Natural killer cell (primary cell): ENCODE measurements at regions of chr21 and their contacts with region 1.

Region 1: GRCh38 chr21:34630536-34631143 is 15.7 kb upstream of the RCAN1 start:
- DNase-seq: peak in 1 of 2 donors; percentile 80
- ATAC-seq: peak; percentile 75 to 78 (median 76)
- H3K4me3 ChIP-seq: no peak overlapping the region
- H3K4me3 Mint-ChIP-seq: no peak overlapping the region
- H3K27ac ChIP-seq: no peak overlapping the region
- H3K27ac Mint-ChIP-seq: no peak overlapping the region
- H3K4me1 ChIP-seq: no peaks in the 10 kb centered on the region
- H3K4me1 Mint-ChIP-seq: no peaks in the 10 kb centered on the region
- H3K27me3 ChIP-seq: no peaks in the 10 kb centered on the region
- H3K27me3 Mint-ChIP-seq: peaks cover 9 to 11% of the 10 kb centered on the region in 2 donors
- CTCF ChIP-seq: peak; percentile 87

Region 2: GRCh38 chr21:34362136-34362444 is 268.6 kb before region 1 on chr21:
- intact Hi-C with region 1: loop called (anchors 1 kb)
- DNase-seq: no peak
- ATAC-seq: peak in 1 of 3 donors; percentile 7
- H3K4me3 ChIP-seq: no peak overlapping the region
- H3K4me3 Mint-ChIP-seq: no peak overlapping the region
- H3K27ac ChIP-seq: no peak overlapping the region
- H3K27ac Mint-ChIP-seq: no peak overlapping the region
- H3K4me1 ChIP-seq: no peaks in the 10 kb centered on the region
- H3K4me1 Mint-ChIP-seq: peaks cover 6 to 7% of the 10 kb centered on the region in 2 donors
- H3K27me3 ChIP-seq: peaks cover 7% of the 10 kb centered on the region
- H3K27me3 Mint-ChIP-seq: peaks cover 7 to 15% of the 10 kb centered on the region in 2 donors
- CTCF ChIP-seq: peak; percentile 71